Calu3 (cell line): ENCODE measurements at regions of chr3 and their contacts with region 1.

Region 1: DNA sequence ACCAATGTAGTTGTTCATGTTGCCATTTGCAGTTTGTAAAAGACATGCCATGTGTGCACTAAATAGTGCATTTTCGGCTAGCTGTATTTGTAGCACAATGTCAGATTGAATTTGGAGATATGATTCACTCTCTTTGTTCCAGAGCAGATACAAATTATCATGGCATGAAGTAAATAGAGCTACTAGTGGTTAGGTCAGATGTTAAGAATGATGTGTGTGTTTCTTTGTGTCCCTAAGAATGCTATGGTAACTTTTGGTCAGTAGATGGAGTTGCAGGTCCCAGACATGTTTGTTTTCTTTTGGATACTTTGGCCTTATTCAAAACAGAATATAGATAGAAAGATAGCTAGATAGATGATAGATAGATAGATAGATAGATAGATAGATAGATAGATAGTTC is 595.8 kb downstream of the NLGN1 start:
- DNase-seq: no peak
- H3K4me3 Mint-ChIP-seq: no peak overlapping the region
- H3K27ac Mint-ChIP-seq: no peak overlapping the region
- H3K4me1 Mint-ChIP-seq: no peaks in the 10 kb centered on the region
- H3K27me3 Mint-ChIP-seq: no peaks in the 10 kb centered on the region
- CTCF ChIP-seq: peak; percentile 61

Region 2: GRCh38 chr3:173411375-173411973 is 581.8 kb before region 1 on chr3:
- CTCF ChIA-PET with region 1: no interaction called
- intact Hi-C with region 1: loop called (anchors 10 kb)
- DNase-seq: peak; percentile 52
- H3K4me3 Mint-ChIP-seq: no peak overlapping the region
- H3K27ac Mint-ChIP-seq: no peak overlapping the region
- H3K4me1 Mint-ChIP-seq: no peaks in the 10 kb centered on the region
- H3K27me3 Mint-ChIP-seq: no peaks in the 10 kb centered on the region
- CTCF ChIP-seq: peak; percentile 64